ENCODE measurements at regions of chr14 and their contacts with region 1.

Region 1: DNA sequence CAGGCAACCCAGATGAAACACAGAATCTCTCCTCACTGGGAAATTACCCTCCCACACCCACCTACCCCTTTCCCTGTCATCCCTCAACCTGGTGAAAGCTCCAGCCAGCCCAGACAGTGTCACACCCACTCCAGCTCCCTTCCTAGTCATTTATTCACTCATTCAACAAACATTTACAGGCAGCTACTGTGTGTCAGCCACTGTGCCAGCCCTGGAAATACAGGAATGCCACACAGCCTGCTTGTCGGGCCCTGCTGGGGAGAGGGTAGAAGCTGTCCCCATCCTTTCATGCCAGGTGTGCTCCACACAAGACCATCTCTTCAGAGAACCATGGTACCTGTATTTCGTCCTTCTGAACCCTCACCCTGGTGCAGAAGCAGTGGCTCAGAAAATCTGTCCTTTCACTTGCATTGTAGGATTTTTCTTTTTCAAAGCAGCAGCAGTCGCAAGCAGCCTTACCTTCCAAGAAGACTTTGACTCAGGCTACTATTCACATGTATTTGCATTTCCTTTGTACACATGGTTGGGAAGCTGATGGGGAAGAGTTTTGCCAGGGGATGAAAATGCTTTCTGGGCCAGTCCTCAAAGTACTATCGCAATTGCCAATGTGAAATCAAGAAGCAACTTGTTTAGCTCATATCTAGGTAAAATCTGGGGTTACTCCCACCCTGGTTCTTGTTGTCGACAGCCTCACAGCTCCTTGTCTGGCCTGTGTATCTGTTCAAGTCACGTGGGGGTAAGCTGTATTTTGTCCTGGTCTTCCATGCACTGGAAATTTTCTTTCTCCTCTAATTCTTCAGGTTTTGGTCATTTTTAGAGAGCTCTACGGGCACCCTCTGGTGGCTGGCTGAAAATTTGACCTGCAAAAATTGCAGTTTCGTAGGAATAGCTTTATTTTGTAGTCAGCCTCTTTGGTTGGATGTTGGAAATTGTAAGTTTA is 147.4 kb upstream of the EGLN3 start:
- DNase-seq: peak; percentile 79
- ATAC-seq: peak; percentile 88
- H3K4me3 ChIP-seq: no peak overlapping the region
- H3K27ac ChIP-seq: no peak overlapping the region
- H3K4me1 ChIP-seq: peaks cover 17% of the 10 kb centered on the region
- H3K27me3 ChIP-seq: no peaks in the 10 kb centered on the region
- CTCF ChIP-seq: peak; percentile 89

Region 2: DNA sequence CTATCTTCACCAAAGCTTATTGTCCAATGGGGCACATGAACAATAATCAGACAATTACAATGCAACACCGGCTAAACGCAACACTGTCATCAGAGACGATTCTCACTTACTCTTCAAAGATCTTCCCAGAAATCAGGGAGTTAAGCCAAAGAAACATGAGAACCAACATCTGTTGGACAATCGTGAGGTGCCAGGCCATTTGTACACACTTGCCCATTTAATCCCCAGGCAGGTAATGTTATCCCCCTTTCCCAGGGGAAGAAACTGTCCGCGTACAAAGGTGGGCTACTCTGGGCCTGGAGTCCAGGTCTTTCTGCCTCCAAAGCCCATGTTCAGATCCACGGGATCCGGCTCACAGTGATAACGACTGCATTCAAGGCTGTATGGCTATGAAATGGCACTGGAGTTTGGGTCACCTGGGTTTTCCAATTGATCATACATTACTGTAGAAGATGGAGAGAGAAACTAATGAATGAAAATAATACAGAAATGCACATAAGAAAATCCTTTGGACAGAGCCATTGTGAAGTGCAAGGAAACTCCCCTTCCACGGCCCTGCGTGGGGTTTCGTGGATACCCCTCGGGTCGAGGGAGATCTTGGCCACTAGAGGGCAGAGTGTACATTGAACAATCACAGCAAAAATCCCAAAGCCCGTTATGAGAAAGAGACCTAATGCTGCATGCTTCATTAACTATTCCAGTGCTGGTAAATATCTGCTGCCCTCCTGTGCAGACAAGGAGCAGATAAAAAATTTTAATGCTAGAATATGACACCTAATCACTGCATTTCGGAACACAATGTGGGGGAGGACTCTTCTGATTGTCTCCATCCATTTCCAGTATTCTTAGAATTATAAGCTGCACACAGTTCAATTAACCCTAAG is 258.9 kb before region 1 on chr14:
- CTCF ChIA-PET with region 1: interaction called, 11 read pairs
- POLR2A ChIA-PET with region 1: no interaction called
- intact Hi-C with region 1: loop called (anchors 1 kb)
- DNase-seq: peak; percentile 69
- ATAC-seq: peak; percentile 83
- H3K4me3 ChIP-seq: no peak overlapping the region
- H3K27ac ChIP-seq: no peak overlapping the region
- H3K4me1 ChIP-seq: no peaks in the 10 kb centered on the region
- H3K27me3 ChIP-seq: peaks cover 17% of the 10 kb centered on the region; the same call in 1 of the 2 replicates
- CTCF ChIP-seq: peak; percentile 93

Region 3: DNA sequence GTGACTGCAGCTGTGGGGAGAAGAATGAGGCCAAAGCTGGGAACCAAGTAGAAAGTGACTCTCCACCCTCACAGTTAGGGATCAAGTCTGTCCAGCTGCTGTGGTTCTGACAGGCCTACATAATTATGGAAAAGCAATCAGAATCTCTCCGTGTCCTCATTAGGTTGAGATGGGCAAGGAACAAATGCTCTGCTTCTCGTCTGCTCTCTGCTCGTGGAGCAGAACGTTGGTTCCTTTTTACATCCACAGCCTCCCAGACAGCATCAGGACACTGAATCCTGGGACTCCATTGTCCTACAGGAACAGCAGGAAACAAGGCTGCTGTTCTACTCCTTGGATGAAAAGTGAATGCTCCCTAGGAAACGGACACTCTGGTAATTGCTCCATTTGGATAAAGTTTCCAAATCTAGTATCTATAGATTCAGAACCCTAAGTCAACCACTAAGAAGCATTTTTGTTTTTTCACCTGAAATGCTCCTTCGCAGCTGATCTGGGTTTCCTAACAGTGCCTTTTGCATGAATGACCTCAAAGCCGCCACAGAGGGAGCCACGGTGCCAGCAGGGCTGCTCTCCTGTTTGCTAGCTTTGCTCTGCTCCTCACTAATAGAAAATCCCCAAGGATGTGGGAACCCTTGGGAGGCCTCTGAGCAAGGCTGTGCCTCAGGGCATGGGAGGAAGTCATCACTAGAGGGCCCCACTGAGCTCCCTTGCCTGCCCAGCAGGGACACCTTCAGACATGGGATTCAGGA is 249.4 kb before region 1 on chr14:
- CTCF ChIA-PET with region 1: interaction called, 33 read pairs
- POLR2A ChIA-PET with region 1: no interaction called
- intact Hi-C with region 1: no loop called
- DNase-seq: peak; percentile 91
- ATAC-seq: peak; percentile 88
- H3K4me3 ChIP-seq: no peak overlapping the region
- H3K27ac ChIP-seq: no peak overlapping the region
- H3K4me1 ChIP-seq: no peaks in the 10 kb centered on the region
- H3K27me3 ChIP-seq: peaks cover 15% of the 10 kb centered on the region; the same call in 1 of the 2 replicates
- CTCF ChIP-seq: peak; percentile 91

Region 4: DNA sequence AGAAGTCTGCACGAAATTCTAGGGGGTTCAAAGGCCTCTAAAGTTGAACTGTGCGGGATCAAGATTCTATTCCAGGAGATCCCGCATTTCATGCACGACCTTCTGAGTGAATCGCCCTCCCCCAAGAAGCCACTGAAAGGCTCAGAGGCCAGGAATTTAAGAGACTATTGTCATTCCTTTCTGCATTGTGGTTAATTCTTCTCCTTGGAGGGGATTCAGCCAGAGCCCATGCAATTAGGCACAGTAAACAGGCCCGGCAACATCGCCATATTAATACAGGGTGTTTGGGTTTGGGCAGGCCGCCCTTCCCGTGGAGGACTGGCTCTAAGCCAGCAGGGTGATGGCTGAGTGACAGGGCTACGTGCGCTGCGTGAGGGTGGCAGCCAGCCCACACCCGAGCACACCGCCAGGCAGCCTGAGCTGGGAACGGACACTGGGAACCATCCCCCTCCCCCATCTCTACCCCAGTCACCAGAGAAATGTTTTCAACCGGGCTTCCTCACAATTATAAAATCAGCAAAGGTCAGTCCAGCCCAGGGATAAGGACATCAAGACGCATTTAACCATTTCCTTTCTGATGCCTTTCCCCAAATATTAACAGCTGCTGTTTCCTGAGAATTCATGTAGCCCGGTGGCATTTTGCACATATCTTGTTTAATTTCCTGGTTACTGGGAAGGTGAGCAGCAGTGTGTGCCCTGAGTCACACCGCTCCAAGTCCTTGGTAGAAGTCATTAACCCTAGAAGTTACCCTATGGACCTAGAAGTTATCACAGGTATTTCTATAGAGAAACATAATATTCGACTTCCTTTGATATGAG is 160.0 kb before region 1 on chr14:
- CTCF ChIA-PET with region 1: no interaction called
- POLR2A ChIA-PET with region 1: no interaction called
- intact Hi-C with region 1: no loop called
- DNase-seq: peak; percentile 80
- ATAC-seq: peak; percentile 84
- H3K4me3 ChIP-seq: peak overlapping the region; percentile 30
- H3K27ac ChIP-seq: peak overlapping the region; percentile 9; the same call in 1 of the 2 replicates
- H3K4me1 ChIP-seq: peaks cover 18% of the 10 kb centered on the region
- H3K27me3 ChIP-seq: no peaks in the 10 kb centered on the region
- CTCF ChIP-seq: no peak

Region 5: DNA sequence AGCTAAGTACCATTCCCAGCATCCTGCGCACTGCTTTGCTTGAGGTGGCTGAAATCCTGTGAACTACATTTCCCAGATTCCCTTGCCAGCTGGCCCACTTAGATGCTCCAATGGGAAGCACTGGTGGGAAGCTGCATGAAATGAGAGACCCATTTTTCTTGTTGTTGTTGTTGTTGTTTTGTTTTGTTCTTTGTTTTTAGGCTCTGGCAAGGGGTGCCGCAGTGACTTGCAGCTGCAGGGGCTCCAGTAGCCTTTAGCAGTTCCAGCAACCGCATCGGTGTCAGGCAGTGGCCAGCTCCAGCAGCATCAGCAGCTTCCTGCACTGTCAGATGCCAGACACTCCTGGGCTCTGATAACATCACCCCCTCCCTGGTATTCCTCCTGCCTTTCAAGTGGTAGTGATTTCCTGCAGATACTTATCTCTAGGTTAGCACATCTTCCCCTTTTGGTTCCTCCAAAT is 138.6 kb before region 1 on chr14:
- CTCF ChIA-PET with region 1: interaction called, 3 read pairs
- POLR2A ChIA-PET with region 1: no interaction called
- intact Hi-C with region 1: loop called (anchors 10 kb)
- DNase-seq: no peak
- ATAC-seq: no peak
- H3K4me3 ChIP-seq: no peak overlapping the region
- H3K27ac ChIP-seq: no peak overlapping the region
- H3K4me1 ChIP-seq: no peaks in the 10 kb centered on the region
- H3K27me3 ChIP-seq: peaks cover 8% of the 10 kb centered on the region
- CTCF ChIP-seq: no peak

Region 6: DNA sequence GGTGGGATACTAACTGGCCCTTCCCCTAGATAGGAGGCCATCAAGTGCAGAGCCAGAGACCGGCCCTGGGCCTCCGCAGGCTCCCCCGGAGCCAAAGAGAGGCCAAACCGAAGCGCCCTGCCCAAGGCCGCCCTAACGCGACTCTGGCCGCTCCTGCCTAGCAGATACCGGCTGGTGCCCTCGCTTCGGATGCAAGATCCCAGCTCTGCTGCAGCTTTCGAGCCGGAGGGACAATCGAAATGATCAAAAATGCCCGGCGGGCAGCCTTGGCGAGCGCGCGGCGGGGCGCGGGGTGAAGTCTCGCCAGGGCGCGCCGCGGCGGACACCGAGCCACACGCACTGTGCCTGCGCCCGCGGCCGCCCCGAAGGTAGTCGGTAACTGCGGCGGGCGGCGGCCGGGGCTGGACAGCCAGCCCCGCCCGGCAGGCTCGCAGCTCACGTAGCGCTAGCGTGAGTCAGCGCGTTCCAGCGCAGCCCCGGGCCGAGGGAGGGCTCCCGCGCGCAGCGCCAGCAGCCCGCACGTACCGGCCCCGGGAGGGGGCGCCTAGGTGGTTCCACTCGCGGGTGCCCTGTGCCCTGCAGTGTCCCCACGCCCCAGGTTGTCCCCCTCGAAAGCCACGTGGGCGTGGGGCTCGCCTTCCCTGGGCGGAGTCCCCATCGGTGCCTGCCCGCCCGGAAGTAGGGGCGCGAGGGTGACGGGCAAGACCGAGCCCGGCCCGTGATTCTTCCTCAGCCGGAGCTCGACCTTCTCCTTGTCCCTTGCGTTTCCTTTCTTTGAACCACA is 38.3 kb before region 1 on chr14:
- CTCF ChIA-PET with region 1: interaction called, 12 read pairs
- POLR2A ChIA-PET with region 1: no interaction called
- intact Hi-C with region 1: no loop called
- DNase-seq: peak; percentile 89
- ATAC-seq: peak; percentile 97
- H3K4me3 ChIP-seq: peak overlapping the region; percentile 67
- H3K27ac ChIP-seq: no peak overlapping the region
- H3K4me1 ChIP-seq: peaks cover 17% of the 10 kb centered on the region
- H3K27me3 ChIP-seq: no peaks in the 10 kb centered on the region
- CTCF ChIP-seq: peak; percentile 47; the same call in 1 of the 2 replicates

Region 7: GRCh38 chr14:34175574-34175973 is 77.3 kb after region 1 on chr14:
- CTCF ChIA-PET with region 1: no interaction called
- POLR2A ChIA-PET with region 1: no interaction called
- intact Hi-C with region 1: no loop called
- DNase-seq: no peak
- ATAC-seq: no peak
- H3K4me3 ChIP-seq: no peak overlapping the region
- H3K27ac ChIP-seq: no peak overlapping the region
- H3K4me1 ChIP-seq: peaks cover 23% of the 10 kb centered on the region
- H3K27me3 ChIP-seq: no peaks in the 10 kb centered on the region
- CTCF ChIP-seq: no peak

Region 8: DNA sequence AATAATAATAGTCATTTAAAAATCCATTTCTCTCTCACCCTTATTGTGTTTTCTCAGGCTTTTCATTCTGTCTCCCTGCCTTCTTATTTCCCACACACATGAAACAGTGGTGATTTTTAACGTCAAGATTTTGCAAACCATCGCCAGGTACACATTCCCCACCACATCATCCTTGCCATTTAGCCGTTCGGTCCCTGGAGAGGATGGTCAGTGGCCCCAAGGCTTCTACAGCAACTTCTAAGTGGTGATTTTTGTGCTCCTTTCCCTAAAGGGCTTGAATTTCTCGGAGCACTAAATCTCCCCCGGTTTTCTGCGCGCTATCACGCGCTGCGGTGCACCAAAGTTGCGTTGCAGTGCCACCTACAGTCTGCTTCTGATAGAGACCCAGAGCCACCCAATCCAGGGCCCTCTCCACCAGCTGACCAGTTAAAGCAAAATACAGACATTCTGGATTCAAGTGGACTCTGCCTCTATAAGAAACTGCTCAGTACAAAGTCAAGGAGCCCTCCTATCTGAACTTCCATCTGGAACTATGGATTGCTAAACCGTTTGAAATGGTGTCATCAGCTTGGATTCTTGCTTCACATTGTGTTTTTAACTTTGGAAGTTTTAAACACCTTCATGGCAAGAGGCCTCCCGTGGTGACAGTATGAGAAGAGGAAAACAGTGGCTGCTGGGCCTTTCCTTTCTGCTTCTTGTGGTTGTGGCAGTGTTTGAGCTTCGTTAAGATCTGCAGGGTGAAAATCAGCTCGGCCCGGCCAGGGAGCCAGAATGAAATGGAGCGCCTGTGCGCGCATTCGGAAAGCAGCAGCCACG is 129.7 kb after region 1 on chr14:
- CTCF ChIA-PET with region 1: interaction called, 4 read pairs
- POLR2A ChIA-PET with region 1: no interaction called
- intact Hi-C with region 1: loop called (anchors 1 kb)
- DNase-seq: peak; percentile 81
- ATAC-seq: peak; percentile 99
- H3K4me3 ChIP-seq: peak overlapping the region; percentile 52
- H3K27ac ChIP-seq: no peak overlapping the region
- H3K4me1 ChIP-seq: peaks cover 14% of the 10 kb centered on the region
- H3K27me3 ChIP-seq: no peaks in the 10 kb centered on the region
- CTCF ChIP-seq: peak; percentile 91

Region 9: DNA sequence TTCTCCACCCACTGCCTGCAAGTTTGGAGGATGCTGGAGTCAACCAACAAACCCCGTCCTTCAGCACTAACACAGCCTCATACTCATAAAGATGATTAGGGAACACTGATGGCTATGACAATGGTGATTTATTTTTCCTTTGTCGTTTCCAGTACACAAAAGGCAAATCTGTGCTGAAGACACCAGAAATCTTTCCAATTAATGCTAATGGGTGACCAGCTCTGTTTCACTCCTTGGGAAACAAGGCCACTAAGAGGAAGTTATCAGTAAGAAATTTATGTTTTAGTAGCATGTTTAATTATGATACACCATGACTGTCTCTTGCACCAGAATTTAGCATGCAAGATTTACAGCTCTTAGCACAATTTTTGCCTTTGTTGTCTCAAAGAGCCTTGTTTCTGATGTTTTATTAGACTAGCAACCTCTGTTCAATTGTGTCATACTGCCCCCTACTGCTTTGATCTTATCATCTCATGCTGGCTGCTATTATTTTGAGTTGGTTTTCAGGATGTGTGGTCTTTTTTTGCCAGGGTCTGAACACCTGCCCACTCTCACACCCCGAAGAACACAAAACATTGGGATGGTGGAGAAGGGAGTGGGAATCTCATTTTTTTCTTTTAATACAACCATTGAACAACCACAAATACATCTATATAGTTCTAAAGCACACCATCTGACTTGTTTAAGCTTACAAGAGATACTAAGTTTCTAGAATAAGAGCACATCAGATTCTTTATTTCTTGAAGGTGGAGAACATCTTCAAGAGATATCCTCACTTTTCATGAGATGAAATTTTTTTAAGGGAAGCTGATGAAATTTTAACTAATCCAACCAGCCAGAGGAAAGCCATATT is 202.8 kb after region 1 on chr14:
- CTCF ChIA-PET with region 1: interaction called, 9 read pairs
- POLR2A ChIA-PET with region 1: no interaction called
- intact Hi-C with region 1: loop called (anchors 1 kb)
- DNase-seq: peak; percentile 78
- ATAC-seq: peak; percentile 74
- H3K4me3 ChIP-seq: no peak overlapping the region
- H3K27ac ChIP-seq: no peak overlapping the region
- H3K4me1 ChIP-seq: no peaks in the 10 kb centered on the region
- H3K27me3 ChIP-seq: no peaks in the 10 kb centered on the region
- CTCF ChIP-seq: peak; percentile 92

Measured in PC-3 (cell line).